WTC11 (cell line): ENCODE measurements at regions of chr12 and their contacts with region 1.

Region 1: DNA sequence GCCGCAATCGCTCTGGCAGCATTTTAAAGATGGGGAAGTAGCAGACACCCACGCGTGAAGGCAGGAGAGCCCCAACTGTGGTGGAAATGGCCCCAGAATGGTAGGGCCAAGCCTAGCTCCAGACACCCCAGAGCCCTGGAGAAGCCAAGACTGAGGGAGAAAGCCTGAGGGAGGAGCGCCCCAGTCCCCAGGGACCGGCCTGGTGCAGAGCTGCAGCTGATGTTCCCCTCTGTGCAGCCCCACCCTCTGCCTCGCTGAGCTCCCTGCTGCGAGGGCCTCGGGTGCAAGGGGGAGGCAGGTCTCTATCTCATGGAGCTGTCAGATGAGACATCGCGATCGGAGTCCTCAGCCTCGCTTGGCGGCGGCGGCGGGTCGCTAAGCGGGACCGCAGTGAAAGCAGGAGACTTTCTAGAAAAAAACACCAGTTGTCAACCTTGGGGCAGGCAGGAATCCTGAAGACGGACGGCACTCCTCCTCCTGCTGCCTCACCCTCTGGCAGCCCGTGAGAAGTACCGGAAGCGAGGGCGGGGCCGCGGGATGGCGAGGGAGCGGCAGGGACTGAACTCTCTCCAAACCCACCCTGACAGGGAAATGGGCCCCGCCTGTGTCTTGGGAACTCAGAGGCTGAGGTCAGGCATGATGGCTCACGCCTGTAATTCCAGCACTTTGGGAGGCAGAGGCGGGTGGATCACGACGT is 6.0 kb downstream of the GAPDH start:
- DNase-seq: peak; percentile 88
- ATAC-seq: peak; percentile 55
- H3K4me3 Mint-ChIP-seq: peak overlapping the region; percentile 44
- H3K27ac Mint-ChIP-seq: peak overlapping the region; percentile 92
- H3K4me1 Mint-ChIP-seq: peaks cover 44% of the 10 kb centered on the region
- H3K27me3 Mint-ChIP-seq: no peaks in the 10 kb centered on the region; the same call in 1 of the 2 replicates
- CTCF ChIP-seq: no peak

Region 2: DNA sequence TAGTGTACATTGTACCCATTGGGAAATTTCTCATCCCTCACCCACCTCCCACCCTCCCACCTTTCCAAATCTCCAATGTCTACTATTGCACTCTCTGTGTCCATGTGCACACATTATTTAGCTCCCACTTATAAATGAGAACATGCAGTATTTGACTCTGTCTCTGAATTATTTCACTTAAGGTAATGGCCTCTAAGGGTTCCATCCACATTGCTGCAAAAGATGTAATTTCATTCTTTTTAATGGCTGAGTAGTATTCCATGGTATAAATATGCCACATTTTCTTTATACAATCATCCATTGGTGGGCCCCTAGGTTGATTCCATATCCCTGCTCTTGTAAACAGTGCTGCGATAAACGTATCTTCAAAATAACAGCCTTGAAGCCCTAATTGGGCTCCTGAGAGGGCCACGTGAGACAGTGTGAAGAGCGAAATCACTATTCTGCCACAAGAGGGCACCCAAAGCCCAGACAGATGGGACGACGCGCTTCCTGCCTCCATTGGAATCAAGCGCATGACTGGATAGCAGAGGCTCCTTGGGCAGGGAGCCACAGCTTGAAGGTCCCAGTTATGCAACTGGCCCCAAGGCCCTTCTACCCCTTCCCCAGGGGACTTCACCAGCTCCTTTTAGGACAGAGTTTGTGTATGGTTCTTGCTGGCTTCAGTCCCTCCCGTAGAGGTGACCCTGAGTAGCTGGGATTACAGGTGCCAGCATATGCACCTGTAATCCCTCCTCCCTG is 116.9 kb before region 1 on chr12:
- CTCF ChIA-PET with region 1: interaction called, 19 read pairs
- POLR2A ChIA-PET with region 1: no interaction called
- DNase-seq: peak; percentile 77
- ATAC-seq: peak; percentile 96
- H3K4me3 Mint-ChIP-seq: no peak overlapping the region
- H3K27ac Mint-ChIP-seq: no peak overlapping the region
- H3K4me1 Mint-ChIP-seq: peaks cover 8% of the 10 kb centered on the region
- H3K27me3 Mint-ChIP-seq: no peaks in the 10 kb centered on the region; the same call in none of the 2 replicates
- CTCF ChIP-seq: peak; percentile 83; the same call in 1 of the 2 replicates

Region 3: DNA sequence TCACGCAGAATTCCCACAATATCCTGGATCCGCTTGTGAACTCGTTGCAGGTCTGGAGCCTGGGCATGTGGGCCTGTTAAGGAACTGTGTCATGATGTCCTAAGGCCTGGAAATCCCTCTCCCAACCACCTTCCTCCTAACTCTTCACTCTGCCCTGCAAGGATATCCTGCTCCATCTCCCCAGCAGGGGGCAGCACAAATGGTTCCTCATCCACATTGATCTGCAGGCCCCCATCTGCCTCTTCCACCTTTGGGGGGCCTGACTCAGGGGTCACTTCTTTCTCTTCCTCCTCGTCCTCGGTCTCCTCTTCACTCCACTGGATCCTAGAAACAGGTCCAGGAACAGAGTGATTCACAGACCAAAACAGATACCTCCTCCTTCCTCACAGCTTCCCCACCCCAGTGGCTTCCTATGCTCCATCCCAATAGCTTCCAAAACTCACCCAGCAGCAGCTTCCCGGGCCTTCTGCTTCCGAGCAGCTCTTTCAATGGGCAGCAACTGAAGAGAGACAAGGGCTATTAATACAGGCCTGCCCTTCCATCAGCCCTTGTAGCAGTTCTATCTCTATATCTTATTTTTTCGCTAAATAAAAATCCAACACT is 23.2 kb after region 1 on chr12:
- CTCF ChIA-PET with region 1: interaction called, 195 read pairs
- POLR2A ChIA-PET with region 1: interaction called, 4 read pairs
- DNase-seq: peak; percentile 80
- ATAC-seq: peak; percentile 56
- H3K4me3 Mint-ChIP-seq: no peak overlapping the region
- H3K27ac Mint-ChIP-seq: no peak overlapping the region
- H3K4me1 Mint-ChIP-seq: peaks cover 7% of the 10 kb centered on the region
- H3K27me3 Mint-ChIP-seq: no peaks in the 10 kb centered on the region
- CTCF ChIP-seq: peak; percentile 39; the same call in 1 of the 2 replicates

Region 4: GRCh38 chr12:6570264-6570887 is 30.0 kb after region 1 on chr12:
- CTCF ChIA-PET with region 1: interaction called, 24 read pairs
- POLR2A ChIA-PET with region 1: interaction called, 4 read pairs
- DNase-seq: peak; percentile 86
- ATAC-seq: peak; percentile 70
- H3K4me3 Mint-ChIP-seq: peak overlapping the region; percentile 35; the same call in 1 of the 2 replicates
- H3K27ac Mint-ChIP-seq: peak overlapping the region; percentile 62
- H3K4me1 Mint-ChIP-seq: peaks cover 13% of the 10 kb centered on the region
- H3K27me3 Mint-ChIP-seq: no peaks in the 10 kb centered on the region
- CTCF ChIP-seq: no peak

Region 5: GRCh38 chr12:6730169-6730568 is 189.8 kb after region 1 on chr12:
- CTCF ChIA-PET with region 1: no interaction called
- POLR2A ChIA-PET with region 1: no interaction called
- DNase-seq: no peak
- ATAC-seq: no peak
- H3K4me3 Mint-ChIP-seq: no peak overlapping the region
- H3K27ac Mint-ChIP-seq: no peak overlapping the region
- H3K4me1 Mint-ChIP-seq: no peaks in the 10 kb centered on the region; the same call in 1 of the 2 replicates
- H3K27me3 Mint-ChIP-seq: no peaks in the 10 kb centered on the region
- CTCF ChIP-seq: no peak